ENCODE measurements at regions of chr1 and their contacts with region 1.

Region 1: DNA sequence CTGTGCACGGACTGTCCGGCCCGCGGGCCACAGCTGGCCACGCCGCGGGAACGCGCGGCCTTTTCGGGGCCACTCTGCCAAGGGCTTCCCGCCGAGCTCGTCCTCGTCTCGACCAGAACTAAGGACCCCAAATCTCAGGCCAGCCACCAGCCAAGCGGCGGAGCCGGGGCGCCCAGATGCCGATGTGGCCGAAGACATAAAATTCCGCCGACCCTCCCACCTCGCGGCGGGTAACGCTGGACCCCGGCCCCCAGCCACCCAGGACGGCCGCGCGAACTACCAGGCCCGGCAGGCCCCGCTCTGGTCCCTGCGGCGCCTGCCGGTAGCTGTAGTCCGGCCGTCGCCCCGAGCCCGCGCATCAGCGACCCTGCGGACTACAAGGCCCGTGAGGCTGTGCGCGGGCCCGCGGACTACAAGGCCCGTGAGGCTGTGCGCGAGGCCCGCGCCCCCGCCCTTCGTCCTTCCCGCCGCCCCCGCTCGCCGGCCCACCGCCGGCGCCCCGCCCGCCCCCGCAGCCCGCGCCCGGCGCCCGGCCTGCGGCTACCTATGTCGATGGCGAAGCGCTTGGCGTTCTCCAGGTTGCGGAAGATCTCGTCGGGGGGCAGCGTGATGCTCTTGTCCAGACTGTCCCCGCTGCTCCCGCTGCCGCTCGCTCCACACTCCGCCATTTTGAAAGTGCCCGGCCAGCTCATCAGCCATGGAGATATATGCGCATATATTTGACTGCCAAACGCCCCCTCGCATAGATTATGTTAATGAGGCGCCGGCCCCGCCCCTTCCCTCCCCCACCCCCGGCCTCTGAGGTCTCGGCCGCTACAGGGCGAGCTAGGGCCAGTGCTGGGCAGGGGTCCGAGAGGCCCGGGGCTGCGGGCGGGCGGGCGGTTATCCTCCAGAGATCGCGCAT is at the start of gene PANK4:
- DNase-seq: peak; percentile 92
- H3K4me3 Mint-ChIP-seq: peak within 1 kb of the TSS; percentile 85
- H3K27ac Mint-ChIP-seq: peak within 1 kb of the TSS; percentile 92
- H3K4me1 Mint-ChIP-seq: peaks cover 45% of the 10 kb centered on the region
- H3K27me3 Mint-ChIP-seq: peaks cover 5% of the 10 kb centered on the region
- total RNA-seq, gene PANK4: 42.6 to 45.1 TPM

Region 2: DNA sequence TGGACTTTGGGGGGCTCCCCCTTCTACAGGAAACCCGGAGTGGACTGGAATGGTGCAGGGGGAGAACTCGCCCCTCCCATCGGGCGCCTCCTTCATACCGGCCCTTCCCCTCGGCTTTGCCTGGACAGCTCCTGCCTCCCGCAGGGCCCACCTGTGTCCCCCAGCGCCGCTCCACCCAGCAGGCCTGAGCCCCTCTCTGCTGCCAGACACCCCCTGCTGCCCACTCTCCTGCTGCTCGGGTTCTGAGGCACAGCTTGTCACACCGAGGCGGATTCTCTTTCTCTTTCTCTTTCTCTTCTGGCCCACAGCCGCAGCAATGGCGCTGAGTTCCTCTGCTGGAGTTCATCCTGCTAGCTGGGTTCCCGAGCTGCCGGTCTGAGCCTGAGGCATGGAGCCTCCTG is 30.1 kb after region 1 on chr1 and contains the start of gene TNFRSF14:
- CTCF ChIA-PET with region 1: interaction called, 4 read pairs
- POLR2A ChIA-PET with region 1: interaction called, 15 read pairs
- intact Hi-C with region 1: no loop called
- DNase-seq: peak; percentile 81
- H3K4me3 Mint-ChIP-seq: peak within 1 kb of the TSS; percentile 99
- H3K27ac Mint-ChIP-seq: peak within 1 kb of the TSS; percentile 99
- H3K4me1 Mint-ChIP-seq: peaks cover 31% of the 10 kb centered on the region
- H3K27me3 Mint-ChIP-seq: no peaks in the 10 kb centered on the region
- total RNA-seq, gene TNFRSF14: 145 to 152 TPM

Region 3: GRCh38 chr1:2642560-2643413 is 116.6 kb after region 1 on chr1:
- CTCF ChIA-PET with region 1: no interaction called
- POLR2A ChIA-PET with region 1: no interaction called
- intact Hi-C with region 1: loop called (anchors 1 kb)
- DNase-seq: peak; percentile 97
- H3K4me3 Mint-ChIP-seq: peak overlapping the region; percentile 85
- H3K27ac Mint-ChIP-seq: peak overlapping the region; percentile 89
- H3K4me1 Mint-ChIP-seq: peaks cover 10% of the 10 kb centered on the region
- H3K27me3 Mint-ChIP-seq: no peaks in the 10 kb centered on the region